OCI-LY7 (cell line): ENCODE measurements at regions of chr14 and their contacts with region 1.

Region 1: DNA sequence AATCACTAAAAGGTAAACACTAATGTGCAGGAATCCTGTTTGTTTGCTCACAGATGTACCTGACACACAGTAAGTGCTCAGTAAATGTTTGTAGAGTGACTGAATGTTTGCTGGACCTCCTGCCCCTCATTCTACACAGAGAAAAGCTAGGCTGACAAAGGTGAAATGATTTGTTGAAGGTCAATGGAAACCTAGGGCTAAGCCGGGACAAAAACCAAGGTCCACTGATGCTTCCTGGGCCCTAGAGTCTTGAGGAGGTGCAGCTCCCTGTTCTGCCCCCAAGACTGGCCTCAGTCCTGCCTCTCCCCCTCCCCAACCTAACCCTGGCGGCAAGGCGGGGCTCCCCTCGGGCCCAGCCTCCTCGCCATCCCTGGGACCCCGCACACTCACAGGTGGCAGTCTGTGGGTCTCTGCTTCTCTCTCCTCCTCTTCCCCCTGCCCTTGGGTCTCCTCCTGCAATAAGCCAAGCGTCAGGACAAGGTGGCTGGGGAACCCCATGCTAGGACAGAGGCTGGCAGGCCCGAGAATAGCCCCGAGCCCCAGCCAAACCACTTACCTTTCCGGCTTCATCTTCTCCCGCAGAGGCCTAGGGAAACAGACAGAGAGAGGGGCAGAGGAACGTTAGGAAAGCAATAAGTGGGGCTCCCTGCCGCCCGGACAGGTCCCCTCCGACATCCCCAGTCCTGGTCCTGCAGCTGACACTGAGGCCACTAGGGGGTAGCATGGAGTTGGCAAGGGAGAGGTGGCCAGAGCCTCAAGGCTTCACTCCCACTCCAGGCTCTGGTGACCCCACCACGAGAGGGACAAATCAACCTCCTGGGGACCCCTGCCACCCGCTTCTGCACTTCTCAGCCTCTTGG is 9.3 kb downstream of the PGF start:
- DNase-seq: peak; percentile 79
- H3K4me3 ChIP-seq: no peak overlapping the region
- H3K27ac ChIP-seq: no peak overlapping the region
- H3K4me1 ChIP-seq: peaks cover 46% of the 10 kb centered on the region
- CTCF ChIP-seq: peak; percentile 95

Region 2: DNA sequence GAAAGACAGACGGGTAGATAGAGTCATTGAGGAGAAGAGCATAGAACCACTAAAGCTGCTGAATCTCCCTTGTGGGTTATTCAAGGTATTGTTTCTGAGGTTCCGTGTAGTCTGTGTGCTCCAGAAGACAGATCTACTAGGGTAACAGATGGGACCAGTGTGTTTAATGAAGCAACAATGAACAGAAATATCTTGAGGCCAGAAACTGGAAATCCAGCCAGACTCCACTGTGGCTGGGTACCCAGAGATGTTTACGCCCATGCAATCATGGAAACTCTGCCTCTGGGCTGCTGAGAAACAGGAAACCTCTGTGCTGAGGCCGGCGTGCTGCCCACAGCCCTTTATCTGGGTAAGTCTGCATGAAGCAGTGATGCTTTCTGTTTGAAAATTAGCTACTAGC is 78.4 kb before region 1 on chr14:
- CTCF ChIA-PET with region 1: no interaction called
- POLR2A ChIA-PET with region 1: no interaction called
- intact Hi-C with region 1: no loop called
- DNase-seq: no peak
- H3K4me3 ChIP-seq: no peak overlapping the region
- H3K27ac ChIP-seq: no peak overlapping the region
- H3K4me1 ChIP-seq: no peaks in the 10 kb centered on the region
- CTCF ChIP-seq: no peak

Region 3: GRCh38 chr14:74922739-74923401 is 23.2 kb before region 1 on chr14 and contains the start of gene RPS6KL1:
- CTCF ChIA-PET with region 1: interaction called, 3 read pairs
- POLR2A ChIA-PET with region 1: interaction called, 18 read pairs
- intact Hi-C with region 1: loop called (anchors 2 kb)
- DNase-seq: peak; percentile 88
- H3K4me3 ChIP-seq: peak within 1 kb of the TSS; percentile 88
- H3K27ac ChIP-seq: no peak within 1 kb of the TSS
- H3K4me1 ChIP-seq: peaks cover 13% of the 10 kb centered on the region
- CTCF ChIP-seq: no peak
- total RNA-seq, gene RPS6KL1: 6.1 and 11.3 TPM in 2 replicates

Region 4: GRCh38 chr14:74973003-74973653 is 27.1 kb after region 1 on chr14:
- CTCF ChIA-PET with region 1: no interaction called
- POLR2A ChIA-PET with region 1: no interaction called
- intact Hi-C with region 1: no loop called
- DNase-seq: peak; percentile 62
- H3K4me3 ChIP-seq: no peak overlapping the region
- H3K27ac ChIP-seq: no peak overlapping the region
- H3K4me1 ChIP-seq: peaks cover 12% of the 10 kb centered on the region
- CTCF ChIP-seq: no peak

Region 5: DNA sequence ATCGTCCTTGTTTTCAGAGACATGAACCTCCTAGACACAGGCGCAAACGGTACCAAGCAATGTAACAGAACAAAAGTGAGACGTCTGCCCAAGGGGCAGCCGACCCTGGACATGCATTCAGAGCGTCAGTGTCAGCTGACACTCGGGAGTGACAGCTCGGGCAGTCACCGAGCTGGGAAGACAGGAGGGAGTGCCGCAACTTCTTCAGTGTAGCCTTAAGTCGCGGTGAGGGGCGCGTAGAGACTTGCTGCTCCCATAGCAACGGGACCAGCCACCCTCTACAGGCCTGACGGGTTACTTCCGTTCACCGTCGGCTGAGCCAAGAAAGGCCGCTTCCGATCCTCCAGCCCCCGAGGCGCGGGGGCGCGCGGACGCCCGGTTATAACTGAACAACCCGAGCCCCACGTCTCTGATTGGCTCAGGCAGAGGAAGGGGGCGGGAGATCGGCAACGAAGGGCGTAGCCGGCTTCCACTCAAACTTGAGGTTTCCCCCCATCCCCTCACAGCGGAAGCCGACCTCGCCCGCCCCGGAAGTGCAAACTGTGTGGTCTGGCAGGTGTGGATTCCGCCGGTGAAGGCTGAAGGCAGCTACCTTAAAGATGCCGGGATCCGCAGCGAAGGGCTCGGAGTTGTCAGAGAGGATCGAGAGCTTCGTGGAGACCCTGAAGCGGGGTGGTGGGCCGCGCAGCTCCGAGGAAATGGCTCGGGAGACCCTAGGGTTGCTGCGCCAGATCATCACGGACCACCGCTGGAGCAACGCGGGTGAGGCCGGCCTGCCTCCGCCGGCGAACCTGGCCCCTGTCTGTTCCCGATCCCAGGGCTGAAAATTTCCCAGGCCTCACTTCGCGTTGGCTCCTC is 56.6 kb after region 1 on chr14 and contains the start of gene EIF2B2:
- CTCF ChIA-PET with region 1: no interaction called
- POLR2A ChIA-PET with region 1: interaction called, 6 read pairs
- intact Hi-C with region 1: loop called (anchors 1 kb)
- DNase-seq: peak; percentile 99
- H3K4me3 ChIP-seq: peak within 1 kb of the TSS; percentile 92
- H3K27ac ChIP-seq: peak within 1 kb of the TSS; percentile 64
- H3K4me1 ChIP-seq: peaks cover 15% of the 10 kb centered on the region
- CTCF ChIP-seq: no peak
- total RNA-seq, gene EIF2B2: 33.5 and 42.0 TPM in 2 replicates

Region 6: DNA sequence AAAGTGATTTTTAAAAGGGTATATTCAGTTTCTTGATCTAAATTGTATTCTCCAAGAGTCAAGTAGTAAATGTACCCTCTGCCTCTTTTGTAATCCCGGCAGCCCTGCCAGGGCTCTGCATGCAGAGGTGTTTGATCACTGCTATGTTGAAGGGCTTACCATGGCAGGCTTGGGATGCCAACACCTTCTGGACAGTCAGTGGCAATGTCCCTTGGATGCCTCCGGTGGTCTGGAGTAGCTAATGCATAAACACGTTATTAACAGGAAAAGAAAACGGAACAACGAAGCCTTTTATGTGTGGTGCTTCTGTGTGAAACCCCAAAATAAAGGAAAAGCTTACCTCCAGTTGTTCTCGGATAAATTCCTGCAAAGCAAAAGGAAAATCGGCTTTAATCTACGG is 76.6 kb after region 1 on chr14:
- CTCF ChIA-PET with region 1: no interaction called
- POLR2A ChIA-PET with region 1: no interaction called
- intact Hi-C with region 1: loop called (anchors 5 kb)
- DNase-seq: peak; percentile 44
- H3K4me3 ChIP-seq: no peak overlapping the region
- H3K27ac ChIP-seq: no peak overlapping the region
- H3K4me1 ChIP-seq: no peaks in the 10 kb centered on the region
- CTCF ChIP-seq: peak; percentile 79

Region 7: DNA sequence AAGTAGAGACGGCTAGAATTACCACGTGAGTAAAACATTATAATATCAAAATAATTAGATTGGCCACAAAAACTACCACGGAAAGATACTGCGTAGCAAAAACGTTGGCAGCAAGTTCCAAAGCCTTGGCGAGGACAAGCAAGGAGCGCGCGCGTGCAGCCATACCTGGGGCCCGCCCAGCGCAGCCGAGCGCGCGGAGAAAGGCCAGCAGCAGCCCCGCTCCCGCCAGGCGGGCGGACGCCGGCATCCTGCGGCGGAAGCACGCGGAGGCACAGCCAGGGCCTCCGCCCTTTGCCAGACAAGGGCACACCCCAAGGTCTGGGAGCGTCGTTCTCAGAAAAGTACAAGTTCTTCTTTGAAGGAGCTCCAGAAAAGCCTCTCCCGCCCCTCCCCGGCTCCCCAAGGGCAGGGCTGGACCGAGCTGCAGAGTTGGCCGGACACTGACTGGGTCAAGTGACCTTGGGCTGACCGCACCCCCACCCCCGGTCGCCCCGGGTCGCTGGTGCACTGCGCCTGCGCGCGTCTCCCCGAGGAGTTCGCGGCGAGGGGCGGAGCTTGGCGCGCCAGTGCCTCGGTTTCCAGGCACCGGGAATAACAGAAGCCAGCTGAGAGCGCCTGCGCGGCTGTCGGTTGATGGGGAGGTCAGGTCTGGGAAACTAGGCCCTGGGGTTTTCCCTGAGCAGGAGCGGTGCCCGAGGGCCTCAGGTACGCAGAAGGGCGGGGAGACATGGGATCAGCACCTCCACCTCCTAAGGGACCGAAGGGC is 123.2 kb after region 1 on chr14 and contains the start of gene ZC2HC1C:
- CTCF ChIA-PET with region 1: interaction called, 4 read pairs
- POLR2A ChIA-PET with region 1: interaction called, 4 read pairs
- intact Hi-C with region 1: loop called (anchors 5 kb)
- DNase-seq: peak; percentile 86
- H3K4me3 ChIP-seq: peak within 1 kb of the TSS; percentile 71
- H3K27ac ChIP-seq: peak within 1 kb of the TSS; percentile 47
- H3K4me1 ChIP-seq: peaks cover 27% of the 10 kb centered on the region
- CTCF ChIP-seq: no peak
- total RNA-seq, gene ZC2HC1C: 3.2 and 3.4 TPM in 2 replicates

Region 8: GRCh38 chr14:75088574-75089373 is 142.7 kb after region 1 on chr14:
- CTCF ChIA-PET with region 1: interaction called, 4 read pairs
- POLR2A ChIA-PET with region 1: interaction called, 3 read pairs
- intact Hi-C with region 1: loop called (anchors 1 kb)
- DNase-seq: peak; percentile 63
- H3K4me3 ChIP-seq: no peak overlapping the region
- H3K27ac ChIP-seq: no peak overlapping the region
- H3K4me1 ChIP-seq: no peaks in the 10 kb centered on the region
- CTCF ChIP-seq: peak; percentile 97

Region 9: GRCh38 chr14:75411214-75411540 is 465.1 kb after region 1 on chr14:
- CTCF ChIA-PET with region 1: no interaction called
- POLR2A ChIA-PET with region 1: no interaction called
- intact Hi-C with region 1: no loop called
- DNase-seq: no peak
- H3K4me3 ChIP-seq: no peak overlapping the region
- H3K27ac ChIP-seq: no peak overlapping the region
- H3K4me1 ChIP-seq: no peaks in the 10 kb centered on the region
- CTCF ChIP-seq: no peak